ENCODE measurements at regions of chr2 and their contacts with region 1.

Region 1: GRCh38 chr2:171512014-171512413 is 10.3 kb upstream of the CYBRD1 start:
- DNase-seq: no peak
- ATAC-seq: no peak
- H3K4me3 ChIP-seq: no peak overlapping the region
- H3K27ac ChIP-seq: no peak overlapping the region
- H3K4me1 ChIP-seq: 0 out of 2 replicates have a peak, but pooled peaks cover 4% of the 10 kb centered on the region
- H3K27me3 ChIP-seq: no peaks in the 10 kb centered on the region
- CTCF ChIP-seq: no peak

Region 2: DNA sequence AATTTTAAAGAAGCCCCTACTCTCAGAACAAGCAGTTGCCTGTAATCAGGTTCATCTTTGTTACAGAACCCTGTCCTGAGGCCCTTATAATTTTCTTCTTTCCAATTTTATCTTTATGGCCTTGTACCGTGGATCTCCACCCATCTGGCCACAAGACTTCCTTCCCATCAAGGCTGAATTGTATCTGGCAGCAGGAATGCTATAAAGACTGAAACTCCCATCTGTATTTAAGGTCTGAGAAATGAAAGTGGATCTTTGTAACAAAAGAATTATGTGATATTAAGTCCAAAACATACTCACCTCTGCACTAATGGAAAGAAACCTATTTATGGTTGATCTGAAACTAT is 170.0 kb before region 1 on chr2:
- CTCF ChIA-PET with region 1: no interaction called
- POLR2A ChIA-PET with region 1: no interaction called
- intact Hi-C with region 1: no loop called
- DNase-seq: no peak
- ATAC-seq: no peak
- H3K4me3 ChIP-seq: no peak overlapping the region
- H3K27ac ChIP-seq: no peak overlapping the region
- H3K4me1 ChIP-seq: peaks cover 14% of the 10 kb centered on the region
- H3K27me3 ChIP-seq: no peaks in the 10 kb centered on the region
- CTCF ChIP-seq: no peak

Region 3: GRCh38 chr2:171491292-171491691 is 20.7 kb before region 1 on chr2:
- CTCF ChIA-PET with region 1: no interaction called
- POLR2A ChIA-PET with region 1: no interaction called
- intact Hi-C with region 1: loop called (anchors 1 kb)
- DNase-seq: no peak
- ATAC-seq: no peak
- H3K4me3 ChIP-seq: no peak overlapping the region
- H3K27ac ChIP-seq: no peak overlapping the region
- H3K4me1 ChIP-seq: no peaks in the 10 kb centered on the region
- H3K27me3 ChIP-seq: no peaks in the 10 kb centered on the region
- CTCF ChIP-seq: no peak

Region 4: DNA sequence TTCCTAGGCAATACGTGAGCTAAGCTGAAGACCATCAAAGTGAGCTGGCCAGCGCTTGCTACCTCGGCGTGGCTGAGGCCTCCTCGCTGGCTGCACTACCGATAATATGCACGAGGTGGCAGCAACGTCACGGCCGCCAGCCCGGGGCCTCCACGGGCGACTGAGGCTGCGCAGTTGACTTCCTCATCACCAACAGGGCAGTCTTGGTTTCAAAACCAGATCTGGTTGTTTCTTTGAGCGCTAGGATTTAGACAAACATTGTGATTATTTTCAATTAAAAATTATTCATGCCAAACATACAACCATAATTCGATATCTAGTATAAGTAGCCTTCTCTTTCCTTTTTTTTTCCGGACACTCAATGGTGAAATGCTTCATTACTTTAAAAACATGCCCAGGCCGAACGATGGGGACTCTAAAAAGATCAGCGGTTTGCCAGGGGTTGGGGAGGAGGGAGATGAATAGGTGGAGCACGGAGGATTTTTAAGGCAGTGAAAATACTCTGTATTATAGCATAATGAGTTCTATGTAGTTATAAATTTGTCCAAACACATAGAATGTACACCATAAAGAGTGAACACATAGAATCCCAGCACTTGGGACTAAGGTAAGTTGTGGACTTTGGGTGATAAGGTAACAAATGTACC is 62.3 kb after region 1 on chr2:
- CTCF ChIA-PET with region 1: no interaction called
- POLR2A ChIA-PET with region 1: no interaction called
- intact Hi-C with region 1: no loop called
- DNase-seq: peak; percentile 84
- ATAC-seq: peak; percentile 98
- H3K4me3 ChIP-seq: no peak overlapping the region
- H3K27ac ChIP-seq: no peak overlapping the region
- H3K4me1 ChIP-seq: no peaks in the 10 kb centered on the region
- H3K27me3 ChIP-seq: no peaks in the 10 kb centered on the region
- CTCF ChIP-seq: peak; percentile 96